Activated CD4-positive, alpha-beta memory T cell treated with anti-CD3 and anti-CD28 coated beads for 36 hours (primary cell): ENCODE measurements at regions of chr17 and their contacts with region 1.

Region 1: GRCh38 chr17:65137021-65137991 is at the start of gene RGS9:
- DNase-seq: peak; percentile 89
- H3K4me3 Mint-ChIP-seq: peak within 1 kb of the TSS; percentile 72
- H3K27ac Mint-ChIP-seq: no peak within 1 kb of the TSS
- H3K4me1 Mint-ChIP-seq: peaks cover 27% of the 10 kb centered on the region
- H3K27me3 Mint-ChIP-seq: peaks cover 11% of the 10 kb centered on the region
- total RNA-seq, gene RGS9: 6.4 to 8.7 TPM

Region 2: DNA sequence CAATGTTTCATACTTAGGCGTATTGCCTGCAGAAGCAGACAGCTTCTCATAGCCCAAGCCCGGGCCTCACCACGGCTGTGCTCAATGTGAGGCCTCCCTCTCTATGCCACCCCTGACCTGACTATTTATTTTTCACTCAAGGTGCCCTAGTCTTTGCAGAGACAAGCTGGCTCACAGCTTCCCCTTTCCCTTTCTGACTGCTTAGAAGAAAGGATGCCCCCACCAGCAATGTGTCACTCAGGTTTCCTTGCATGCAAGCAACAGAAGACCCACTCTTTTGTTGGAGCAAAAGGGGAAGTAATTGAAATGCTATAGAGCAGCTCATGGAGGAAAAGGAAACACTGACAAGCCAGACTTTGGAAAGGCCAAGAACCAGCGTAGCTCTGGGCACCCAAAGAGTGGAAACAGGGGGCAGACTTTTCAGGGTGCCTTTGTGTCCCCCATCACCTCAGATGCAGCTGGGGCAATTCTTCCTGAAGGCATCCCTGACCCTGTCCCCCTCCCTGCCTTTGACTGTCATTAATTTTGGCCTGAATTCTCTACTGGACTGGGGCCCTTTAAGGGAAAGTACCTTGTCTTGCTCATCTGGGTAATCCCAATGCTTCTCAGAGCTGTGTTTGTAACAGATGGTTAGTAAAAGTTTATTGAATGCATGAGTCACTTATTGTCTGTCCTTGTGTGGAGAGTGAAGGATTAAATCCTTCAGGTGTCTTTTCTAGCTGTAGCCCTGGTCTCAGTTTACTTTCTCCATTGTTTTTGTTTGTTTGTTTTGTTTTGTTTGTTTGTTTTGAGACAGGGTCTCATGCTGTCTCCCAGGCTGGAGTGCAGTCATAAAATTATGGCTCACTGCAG is 17.7 kb after region 1 on chr17:
- CTCF ChIA-PET with region 1: interaction called, 8 read pairs
- POLR2A ChIA-PET with region 1: no interaction called
- intact Hi-C with region 1: loop called (anchors 2 kb)
- DNase-seq: no peak
- H3K4me3 Mint-ChIP-seq: no peak overlapping the region
- H3K27ac Mint-ChIP-seq: no peak overlapping the region
- H3K4me1 Mint-ChIP-seq: peaks cover 13% of the 10 kb centered on the region
- H3K27me3 Mint-ChIP-seq: peaks cover 1% of the 10 kb centered on the region

Region 3: GRCh38 chr17:65173284-65173793 is 36.0 kb after region 1 on chr17:
- CTCF ChIA-PET with region 1: interaction called, 30 read pairs
- POLR2A ChIA-PET with region 1: interaction called, 4 read pairs
- intact Hi-C with region 1: no loop called
- DNase-seq: peak; percentile 91
- H3K4me3 Mint-ChIP-seq: no peak overlapping the region
- H3K27ac Mint-ChIP-seq: no peak overlapping the region
- H3K4me1 Mint-ChIP-seq: peaks cover 34% of the 10 kb centered on the region
- H3K27me3 Mint-ChIP-seq: no peaks in the 10 kb centered on the region

Region 4: GRCh38 chr17:65191811-65192740 is 54.8 kb after region 1 on chr17:
- CTCF ChIA-PET with region 1: interaction called, 10 read pairs
- POLR2A ChIA-PET with region 1: no interaction called
- intact Hi-C with region 1: no loop called
- DNase-seq: peak; percentile 51
- H3K4me3 Mint-ChIP-seq: no peak overlapping the region
- H3K27ac Mint-ChIP-seq: peak overlapping the region; percentile 49
- H3K4me1 Mint-ChIP-seq: peaks cover 40% of the 10 kb centered on the region
- H3K27me3 Mint-ChIP-seq: no peaks in the 10 kb centered on the region

Region 5: DNA sequence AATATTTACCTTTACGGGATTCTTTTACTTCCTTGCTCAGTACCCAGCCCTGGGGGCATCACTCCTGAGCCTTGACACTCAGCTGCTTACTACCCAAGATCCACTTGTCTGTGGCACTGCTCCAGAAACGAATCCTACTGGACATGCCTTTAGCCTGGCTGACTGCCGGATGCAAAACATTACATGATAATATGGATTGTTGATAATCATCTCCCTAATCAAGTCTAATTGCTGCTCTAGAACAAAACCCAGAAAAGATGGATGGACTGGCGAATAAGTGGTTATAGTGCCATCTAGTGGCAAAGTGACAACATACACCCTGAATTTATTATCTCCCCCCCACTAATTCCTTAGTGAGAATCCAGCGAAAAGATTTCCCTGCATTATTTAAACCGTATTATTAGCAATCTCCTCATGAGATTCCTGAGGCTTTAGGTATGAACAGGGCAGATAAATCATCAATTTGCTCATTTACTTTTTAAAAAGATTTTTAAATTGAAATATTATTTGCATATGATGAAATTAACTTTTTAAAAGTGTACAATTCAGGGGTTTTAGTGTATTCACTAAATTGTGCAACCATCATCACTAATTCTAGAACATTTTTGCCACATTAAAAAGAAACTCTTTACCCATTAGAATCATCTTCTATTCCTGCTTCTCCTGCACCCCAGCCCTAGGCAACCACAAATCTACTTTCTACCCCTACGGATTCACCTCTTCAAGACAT is 61.5 kb after region 1 on chr17:
- CTCF ChIA-PET with region 1: interaction called, 11 read pairs
- POLR2A ChIA-PET with region 1: no interaction called
- intact Hi-C with region 1: loop called (anchors 1 kb)
- DNase-seq: no peak
- H3K4me3 Mint-ChIP-seq: no peak overlapping the region
- H3K27ac Mint-ChIP-seq: no peak overlapping the region
- H3K4me1 Mint-ChIP-seq: peaks cover 26% of the 10 kb centered on the region
- H3K27me3 Mint-ChIP-seq: peaks cover 2% of the 10 kb centered on the region

Region 6: DNA sequence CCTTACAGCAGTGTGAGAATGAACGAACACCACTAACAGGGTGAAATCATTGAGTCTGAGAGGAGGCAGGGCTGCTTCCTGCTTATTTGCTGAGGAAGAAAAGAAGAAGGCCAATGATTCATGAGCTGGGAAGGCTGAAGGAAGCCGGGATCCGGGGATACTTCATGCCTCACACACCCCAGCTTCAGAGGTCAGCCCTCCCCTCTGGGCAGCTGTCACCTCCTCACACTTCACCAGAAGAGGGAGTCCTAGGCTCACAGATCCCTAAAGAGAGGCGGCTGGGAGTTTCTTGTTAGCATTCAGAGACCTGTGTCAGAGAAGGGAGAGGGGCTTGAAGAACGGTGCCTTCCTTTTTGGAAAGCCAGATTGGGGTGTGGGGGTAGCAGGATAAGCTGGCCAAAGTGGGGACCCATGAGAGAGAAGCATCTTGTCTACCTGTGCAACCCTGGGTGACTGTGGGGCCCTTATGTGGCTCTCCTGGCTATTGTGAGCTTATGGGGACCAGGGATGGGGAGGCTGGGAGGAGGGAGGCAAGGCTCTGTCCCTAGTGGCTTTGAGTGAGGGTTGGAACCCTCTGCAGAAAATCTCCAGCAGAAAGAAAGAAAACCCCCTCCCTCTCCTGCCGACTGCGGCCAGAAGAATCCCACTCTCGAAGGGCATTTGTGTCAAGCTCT is 94.5 kb after region 1 on chr17:
- CTCF ChIA-PET with region 1: no interaction called
- POLR2A ChIA-PET with region 1: no interaction called
- intact Hi-C with region 1: no loop called
- DNase-seq: peak; percentile 72
- H3K4me3 Mint-ChIP-seq: no peak overlapping the region
- H3K27ac Mint-ChIP-seq: no peak overlapping the region
- H3K4me1 Mint-ChIP-seq: peaks cover 41% of the 10 kb centered on the region
- H3K27me3 Mint-ChIP-seq: peaks cover 12% of the 10 kb centered on the region